GM10248 (cell line): ENCODE measurements at regions of chr16 and their contacts with region 1.

Region 1: GRCh38 chr16:27401768-27402568 is at the start of gene IL21R:
- DNase-seq: peak; percentile 84
- CTCF ChIP-seq: no peak

Region 2: GRCh38 chr16:27359051-27359450 is 42.9 kb before region 1 on chr16:
- CTCF ChIA-PET with region 1: no interaction called
- POLR2A ChIA-PET with region 1: no interaction called
- DNase-seq: no peak
- CTCF ChIP-seq: no peak

Region 3: GRCh38 chr16:27374804-27375425 is 27.1 kb before region 1 on chr16:
- CTCF ChIA-PET with region 1: interaction called, 47 read pairs
- POLR2A ChIA-PET with region 1: interaction called, 18 read pairs
- DNase-seq: peak; percentile 74
- CTCF ChIP-seq: peak; percentile 38

Region 4: DNA sequence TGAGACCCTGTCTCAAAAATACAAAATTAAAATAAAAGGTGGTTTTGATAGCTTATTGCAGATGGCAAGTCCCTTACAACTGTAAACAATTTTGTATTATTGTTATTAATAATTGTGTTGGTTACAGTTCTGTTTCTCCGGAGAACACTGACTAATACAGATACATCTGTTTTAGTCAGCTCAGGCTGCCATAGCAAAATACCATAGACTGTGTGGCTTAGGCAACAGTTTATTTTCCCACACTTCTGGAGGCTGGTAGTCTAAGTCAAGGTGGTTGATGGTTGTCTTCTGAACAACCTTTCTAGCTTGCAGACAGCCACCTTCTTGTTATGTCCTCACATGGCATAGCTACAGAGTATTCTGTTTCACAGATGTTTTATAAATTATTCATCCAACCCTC is 14.2 kb before region 1 on chr16:
- CTCF ChIA-PET with region 1: interaction called, 23 read pairs
- POLR2A ChIA-PET with region 1: interaction called, 9 read pairs
- DNase-seq: no peak
- CTCF ChIP-seq: no peak